SK-N-SH (cell line): ENCODE measurements at regions of chr17 and their contacts with region 1.

Region 1: GRCh38 chr17:38557836-38558727 is 47.7 kb downstream of the SRCIN1 start:
- DNase-seq: peak; percentile 97
- H3K4me3 ChIP-seq: peak overlapping the region; percentile 35 to 55
- H3K27ac ChIP-seq: no peak overlapping the region; a peak in 1 of 4 replicates
- H3K4me1 ChIP-seq: peaks cover 0 to 30% of the 10 kb centered on the region in 2 experiments; a peak in 2 of 4 replicates
- H3K27me3 ChIP-seq: no peaks in the 10 kb centered on the region
- CTCF ChIP-seq: peak; percentile 84
- EP300 ChIP-seq: no peak; a peak in 1 of 4 replicates
- RAD21 ChIP-seq: peak; percentile 83

Region 2: DNA sequence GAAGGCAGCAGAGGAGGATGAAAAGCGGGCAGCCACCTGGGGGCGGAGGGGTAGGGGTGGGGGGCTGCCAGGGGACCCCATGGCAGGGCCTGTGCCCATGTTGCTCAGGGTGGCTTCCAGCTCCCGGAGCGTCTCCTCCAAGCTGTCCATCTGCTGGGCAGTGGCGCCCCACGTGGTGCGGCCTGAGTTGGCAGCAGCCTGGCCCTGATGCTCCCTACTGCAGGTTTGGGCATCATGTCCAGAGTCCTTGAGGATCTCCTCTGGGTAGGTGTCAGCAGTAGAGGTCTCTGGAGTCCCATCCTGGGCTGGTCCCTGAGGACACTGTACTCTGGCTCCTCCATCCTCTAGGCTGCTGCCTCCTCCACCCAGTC is 13.3 kb before region 1 on chr17:
- CTCF ChIA-PET with region 1: interaction called, 57 read pairs
- POLR2A ChIA-PET with region 1: no interaction called
- DNase-seq: no peak
- H3K4me3 ChIP-seq: no peak overlapping the region
- H3K27ac ChIP-seq: no peak overlapping the region
- H3K4me1 ChIP-seq: no peaks in the 10 kb centered on the region; a peak in 1 of 4 replicates
- H3K27me3 ChIP-seq: no peaks in the 10 kb centered on the region
- CTCF ChIP-seq: no peak
- EP300 ChIP-seq: no peak
- RAD21 ChIP-seq: no peak

Region 3: DNA sequence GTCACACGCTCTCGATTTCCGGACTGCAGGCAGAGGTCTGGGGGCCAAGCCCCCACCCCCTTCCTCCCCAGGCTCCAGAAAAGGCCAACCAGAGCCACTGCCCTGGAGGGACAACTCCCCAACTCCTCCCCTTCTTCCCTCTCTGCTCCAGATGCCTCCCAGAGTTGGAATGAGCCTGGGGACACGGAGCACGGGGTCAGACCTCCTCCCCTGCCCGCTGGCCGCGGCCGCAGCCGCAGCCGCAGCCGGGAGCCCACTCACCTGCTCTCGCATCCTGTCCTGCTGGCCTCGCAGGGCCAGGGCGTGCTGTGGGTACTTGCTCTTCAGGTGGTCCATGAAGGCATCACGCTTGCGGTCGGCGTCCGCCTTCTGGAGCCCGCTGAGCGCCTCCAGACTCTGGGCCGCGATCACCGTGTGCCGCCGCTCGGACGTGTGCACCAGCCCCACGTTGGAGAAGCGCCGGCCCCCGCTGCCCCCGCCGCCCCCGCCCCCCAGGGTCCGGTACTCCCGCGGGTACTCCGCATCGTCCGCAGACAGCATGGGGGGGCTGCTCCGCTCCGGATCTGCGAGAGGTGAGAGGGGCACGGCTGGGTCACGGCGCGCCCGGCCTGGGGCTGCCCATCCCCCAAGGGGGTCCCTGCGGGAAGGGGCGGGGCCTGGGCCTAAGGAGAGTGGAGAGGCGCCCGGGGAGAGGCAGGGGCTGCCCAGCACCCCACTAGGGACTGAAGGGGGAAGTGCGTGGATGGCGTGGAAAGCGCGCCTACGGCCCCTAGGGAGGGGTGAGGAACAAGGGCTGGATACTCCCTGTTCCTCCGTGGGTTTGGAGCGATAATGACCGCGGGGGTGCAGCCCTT is 20.4 kb after region 1 on chr17:
- CTCF ChIA-PET with region 1: interaction called, 167 read pairs
- POLR2A ChIA-PET with region 1: interaction called, 3 read pairs
- DNase-seq: peak; percentile 84
- H3K4me3 ChIP-seq: no peak overlapping the region
- H3K27ac ChIP-seq: no peak overlapping the region
- H3K4me1 ChIP-seq: peaks cover 6 to 36% of the 10 kb centered on the region in 2 experiments; a peak in 2 of 4 replicates
- H3K27me3 ChIP-seq: peaks cover 22% of the 10 kb centered on the region; the same call in 1 of the 2 replicates
- CTCF ChIP-seq: no peak
- EP300 ChIP-seq: no peak
- RAD21 ChIP-seq: no peak

Region 4: GRCh38 chr17:38598536-38598935 is 40.5 kb after region 1 on chr17:
- CTCF ChIA-PET with region 1: interaction called, 88 read pairs
- POLR2A ChIA-PET with region 1: interaction called, 3 read pairs
- DNase-seq: peak; percentile 86
- H3K4me3 ChIP-seq: no peak overlapping the region
- H3K27ac ChIP-seq: no peak overlapping the region
- H3K4me1 ChIP-seq: peaks cover 0 to 32% of the 10 kb centered on the region in 2 experiments; a peak in 1 of 4 replicates
- H3K27me3 ChIP-seq: peaks cover 9% of the 10 kb centered on the region; the same call in 1 of the 2 replicates
- CTCF ChIP-seq: no peak
- EP300 ChIP-seq: no peak
- RAD21 ChIP-seq: no peak

Region 5: GRCh38 chr17:38660097-38661025 is 102.3 kb after region 1 on chr17:
- CTCF ChIA-PET with region 1: interaction called, 63 read pairs
- POLR2A ChIA-PET with region 1: no interaction called
- DNase-seq: no peak
- H3K4me3 ChIP-seq: no peak overlapping the region
- H3K27ac ChIP-seq: no peak overlapping the region
- H3K4me1 ChIP-seq: peaks cover 0 to 4% of the 10 kb centered on the region in 2 experiments; a peak in 1 of 4 replicates
- H3K27me3 ChIP-seq: no peaks in the 10 kb centered on the region; the same call in 1 of the 2 replicates
- CTCF ChIP-seq: no peak
- EP300 ChIP-seq: no peak
- RAD21 ChIP-seq: no peak